HAP-1 (cell line): ENCODE measurements at regions of chr9 and their contacts with region 1.

Region 1: GRCh38 chr9:6664204-6664680 is 18.7 kb upstream of the GLDC start:
- DNase-seq: no peak
- H3K4me3 ChIP-seq: no peak overlapping the region
- H3K4me1 ChIP-seq: no peaks in the 10 kb centered on the region
- H3K27me3 ChIP-seq: no peaks in the 10 kb centered on the region

Region 2: GRCh38 chr9:6711403-6711802 is 47.2 kb after region 1 on chr9:
- in situ Hi-C with region 1: loop called (anchors 5 kb)
- DNase-seq: no peak
- H3K4me3 ChIP-seq: no peak overlapping the region
- H3K4me1 ChIP-seq: no peaks in the 10 kb centered on the region
- H3K27me3 ChIP-seq: no peaks in the 10 kb centered on the region

Region 3: GRCh38 chr9:6864102-6864501 is 199.9 kb after region 1 on chr9:
- in situ Hi-C with region 1: no loop called
- DNase-seq: no peak
- H3K4me3 ChIP-seq: no peak overlapping the region
- H3K4me1 ChIP-seq: no peaks in the 10 kb centered on the region; the same call in 1 of the 2 replicates
- H3K27me3 ChIP-seq: no peaks in the 10 kb centered on the region